ENCODE measurements at regions of chr9 and their contacts with region 1.

Region 1: DNA sequence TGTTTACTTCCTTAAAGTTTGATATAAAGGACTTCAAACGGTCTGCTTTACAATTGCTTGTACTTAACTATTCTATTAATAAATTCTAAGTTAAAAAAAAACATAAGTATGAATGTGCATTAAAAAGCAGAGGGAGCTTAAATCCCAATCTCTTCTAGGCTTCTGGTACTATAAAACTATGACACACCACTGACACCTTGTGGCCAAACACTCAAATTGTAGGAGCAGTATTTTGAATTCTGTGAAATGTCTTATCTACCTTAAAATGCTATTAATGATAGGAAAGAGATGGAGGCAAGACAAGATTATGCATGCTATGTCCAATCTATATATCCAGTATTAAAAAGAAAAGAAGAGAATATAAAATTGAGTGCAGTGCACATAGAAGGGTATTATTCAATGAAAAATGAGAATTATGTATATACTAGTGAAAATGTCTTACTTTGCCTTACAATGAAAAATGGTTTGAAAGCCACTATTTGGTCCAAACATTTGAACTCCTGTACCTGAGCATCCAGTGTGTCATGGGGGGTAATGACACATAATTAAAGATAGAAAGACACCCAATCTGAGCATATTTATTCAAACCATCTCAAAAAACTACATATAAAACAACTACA is 87.6 kb downstream of the ERP44 start:
- DNase-seq: peak; percentile 67
- H3K4me3 Mint-ChIP-seq: no peak overlapping the region
- H3K27ac Mint-ChIP-seq: no peak overlapping the region
- H3K4me1 Mint-ChIP-seq: no peaks in the 10 kb centered on the region
- H3K27me3 Mint-ChIP-seq: no peaks in the 10 kb centered on the region

Region 2: GRCh38 chr9:99162759-99163364 is 848.3 kb before region 1 on chr9:
- CTCF ChIA-PET with region 1: no interaction called
- intact Hi-C with region 1: loop called (anchors 2 kb)
- DNase-seq: no peak
- H3K4me3 Mint-ChIP-seq: no peak overlapping the region
- H3K27ac Mint-ChIP-seq: no peak overlapping the region
- H3K4me1 Mint-ChIP-seq: peaks cover 15% of the 10 kb centered on the region
- H3K27me3 Mint-ChIP-seq: peaks cover 12% of the 10 kb centered on the region

Region 3: DNA sequence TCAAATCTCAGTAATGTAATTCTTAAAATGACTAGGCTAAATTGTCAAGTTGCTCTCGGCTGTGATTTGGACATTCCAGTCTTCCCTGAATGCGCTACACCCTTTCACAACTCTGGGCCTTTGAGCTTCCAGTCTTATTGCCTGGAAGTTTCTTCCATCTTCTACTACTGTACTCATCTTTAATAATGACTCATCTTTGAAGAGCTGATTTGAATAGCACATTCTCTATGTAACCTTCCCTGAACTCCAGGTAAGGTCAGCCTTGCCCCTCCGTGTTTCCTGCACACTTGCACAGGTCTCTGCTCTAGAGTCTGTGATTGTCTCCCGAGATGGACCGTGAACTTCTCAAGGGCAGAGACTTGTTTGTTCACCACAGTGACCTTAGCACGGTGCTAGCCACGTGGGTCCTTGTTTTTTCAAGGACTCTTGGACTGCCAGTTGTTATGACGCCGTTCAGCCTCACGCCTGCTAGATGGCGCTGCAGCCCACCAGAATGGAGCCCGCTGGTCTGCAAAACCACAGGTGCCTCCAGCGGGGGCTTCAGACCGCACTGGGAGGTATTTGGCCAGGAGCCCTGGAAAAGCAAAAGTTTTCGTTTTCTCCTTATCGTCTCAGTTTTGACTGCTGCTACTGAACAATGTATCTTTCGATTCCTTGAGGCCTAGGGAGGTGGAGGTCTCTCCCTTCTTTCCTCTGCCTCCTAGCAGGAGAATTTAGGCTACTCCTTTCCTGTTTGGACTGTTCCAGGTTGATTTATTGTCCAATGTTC is 744.7 kb before region 1 on chr9:
- CTCF ChIA-PET with region 1: no interaction called
- intact Hi-C with region 1: loop called (anchors 1 kb)
- DNase-seq: peak; percentile 82
- H3K4me3 Mint-ChIP-seq: peak overlapping the region; percentile 19
- H3K27ac Mint-ChIP-seq: no peak overlapping the region
- H3K4me1 Mint-ChIP-seq: peaks cover 17% of the 10 kb centered on the region
- H3K27me3 Mint-ChIP-seq: peaks cover 1% of the 10 kb centered on the region

Region 4: DNA sequence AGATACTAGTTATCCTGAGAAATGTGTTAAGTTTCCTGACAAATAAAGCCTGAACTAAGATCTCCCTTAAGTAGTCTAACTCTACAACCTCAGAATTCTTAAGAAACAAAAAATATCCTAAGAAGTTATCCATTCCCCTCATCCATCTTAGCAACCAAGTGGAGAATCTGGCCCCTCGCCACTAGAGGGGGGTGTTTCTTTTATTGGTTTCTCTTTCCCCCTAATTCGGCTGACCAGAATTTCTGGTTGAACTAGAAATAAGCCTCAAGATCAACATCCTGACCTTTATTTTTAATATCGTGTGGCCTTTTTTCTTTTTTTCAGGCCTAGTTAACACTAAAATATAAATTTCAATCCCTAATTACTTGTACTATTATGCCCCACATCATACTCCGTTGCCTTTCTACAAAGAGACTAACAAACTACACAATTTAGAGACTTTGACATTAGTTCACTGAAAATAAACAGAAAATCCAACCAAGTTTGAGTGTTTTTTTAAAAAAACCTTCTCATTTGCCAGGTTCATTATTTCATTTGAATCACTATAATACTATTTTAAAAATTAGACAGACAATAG is 203.8 kb before region 1 on chr9:
- CTCF ChIA-PET with region 1: interaction called, 6 read pairs
- intact Hi-C with region 1: loop called (anchors 1 kb)
- DNase-seq: peak; percentile 79
- H3K4me3 Mint-ChIP-seq: no peak overlapping the region
- H3K27ac Mint-ChIP-seq: no peak overlapping the region
- H3K4me1 Mint-ChIP-seq: peaks cover 21% of the 10 kb centered on the region
- H3K27me3 Mint-ChIP-seq: no peaks in the 10 kb centered on the region

Region 5: DNA sequence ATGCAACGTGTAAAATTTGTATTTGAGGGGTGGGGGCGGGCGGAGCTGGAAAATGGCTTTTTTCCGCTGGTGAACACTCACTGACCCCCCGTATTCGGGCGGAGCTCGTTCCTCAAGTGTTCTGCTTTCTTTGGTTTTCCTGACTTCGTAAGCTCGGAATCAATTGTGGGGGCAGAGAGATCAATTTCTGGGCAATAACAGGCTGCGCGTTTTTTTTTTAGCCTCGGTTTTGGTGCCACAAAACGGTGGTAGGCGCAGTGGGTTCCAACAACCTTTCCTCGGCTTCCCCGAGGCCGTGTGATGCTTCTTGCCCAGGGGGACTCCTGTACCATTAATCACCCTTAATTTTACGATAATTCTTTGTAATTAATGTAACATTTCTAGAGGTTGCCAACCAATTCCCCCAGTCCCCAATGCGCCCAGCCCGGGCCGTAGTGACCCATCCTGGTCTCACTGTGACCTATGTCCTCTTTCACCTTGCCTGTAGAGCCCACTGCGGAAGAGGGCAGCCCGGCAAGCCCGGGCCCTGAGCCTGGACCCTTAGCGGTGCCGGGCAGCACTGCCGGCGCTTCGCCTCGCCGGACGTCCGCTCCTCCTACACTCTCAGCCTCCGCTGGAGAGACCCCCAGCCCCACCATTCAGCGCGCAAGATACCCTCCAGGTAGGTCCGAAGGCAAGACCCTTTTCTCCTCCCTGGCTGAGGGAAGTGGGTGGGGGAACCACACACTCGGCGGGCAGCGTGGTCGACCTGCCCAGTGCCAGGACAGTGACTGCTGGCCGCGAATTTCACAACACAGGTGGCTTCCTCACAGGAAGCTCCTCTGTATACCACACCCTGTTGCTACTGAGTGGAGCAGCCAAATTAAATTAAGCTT is 185.8 kb before region 1 on chr9:
- CTCF ChIA-PET with region 1: interaction called, 6 read pairs
- intact Hi-C with region 1: loop called (anchors 1 kb)
- DNase-seq: no peak
- H3K4me3 Mint-ChIP-seq: peak overlapping the region; percentile 94
- H3K27ac Mint-ChIP-seq: no peak overlapping the region
- H3K4me1 Mint-ChIP-seq: peaks cover 57% of the 10 kb centered on the region
- H3K27me3 Mint-ChIP-seq: peaks cover 33% of the 10 kb centered on the region

Region 6: GRCh38 chr9:99878651-99879050 is 132.5 kb before region 1 on chr9:
- CTCF ChIA-PET with region 1: interaction called, 5 read pairs
- intact Hi-C with region 1: loop called (anchors 1 kb)
- DNase-seq: no peak
- H3K4me3 Mint-ChIP-seq: no peak overlapping the region
- H3K27ac Mint-ChIP-seq: no peak overlapping the region
- H3K4me1 Mint-ChIP-seq: peaks cover 6% of the 10 kb centered on the region
- H3K27me3 Mint-ChIP-seq: peaks cover 4% of the 10 kb centered on the region

Region 7: DNA sequence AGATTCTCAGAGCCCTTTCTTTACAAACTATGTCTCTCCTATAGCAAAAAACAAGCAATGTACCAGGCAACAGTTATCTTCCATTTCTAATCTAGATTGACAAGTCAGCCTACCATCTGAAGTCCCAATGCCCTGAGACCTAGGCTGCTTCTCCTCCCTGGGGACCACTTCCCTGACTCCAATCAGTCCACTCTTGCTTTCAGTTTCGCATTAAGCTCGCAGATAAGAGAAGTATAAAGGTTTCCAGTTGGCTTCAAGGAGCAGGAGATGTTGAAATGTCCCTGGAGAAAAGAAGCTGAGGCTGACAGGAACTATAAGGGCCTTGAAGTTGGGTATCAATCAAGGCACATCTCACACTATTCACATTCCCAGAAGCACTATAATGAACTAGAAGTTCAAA is 55.4 kb after region 1 on chr9:
- CTCF ChIA-PET with region 1: no interaction called
- intact Hi-C with region 1: no loop called
- DNase-seq: no peak
- H3K4me3 Mint-ChIP-seq: no peak overlapping the region
- H3K27ac Mint-ChIP-seq: no peak overlapping the region
- H3K4me1 Mint-ChIP-seq: peaks cover 15% of the 10 kb centered on the region
- H3K27me3 Mint-ChIP-seq: no peaks in the 10 kb centered on the region